ENCODE measurements at regions of chr16 and their contacts with region 1.

Region 1: GRCh38 chr16:55711959-55712876 is 56.4 kb downstream of the SLC6A2 start:
- DNase-seq: peak; percentile 40 to 75
- ATAC-seq: peak; percentile 31 to 73 (median 68)
- H3K4me3 ChIP-seq: no peak overlapping the region
- H3K4me3 Mint-ChIP-seq: no peak overlapping the region
- H3K27ac ChIP-seq: no peak overlapping the region
- H3K27ac Mint-ChIP-seq: no peak overlapping the region
- H3K4me1 ChIP-seq: no peaks in the 10 kb centered on the region
- H3K4me1 Mint-ChIP-seq: no peaks in the 10 kb centered on the region
- H3K27me3 ChIP-seq: no peaks in the 10 kb centered on the region
- H3K27me3 Mint-ChIP-seq: peaks cover 7% of the 10 kb centered on the region in 2 donors
- CTCF ChIP-seq: peak; percentile 81

Region 2: DNA sequence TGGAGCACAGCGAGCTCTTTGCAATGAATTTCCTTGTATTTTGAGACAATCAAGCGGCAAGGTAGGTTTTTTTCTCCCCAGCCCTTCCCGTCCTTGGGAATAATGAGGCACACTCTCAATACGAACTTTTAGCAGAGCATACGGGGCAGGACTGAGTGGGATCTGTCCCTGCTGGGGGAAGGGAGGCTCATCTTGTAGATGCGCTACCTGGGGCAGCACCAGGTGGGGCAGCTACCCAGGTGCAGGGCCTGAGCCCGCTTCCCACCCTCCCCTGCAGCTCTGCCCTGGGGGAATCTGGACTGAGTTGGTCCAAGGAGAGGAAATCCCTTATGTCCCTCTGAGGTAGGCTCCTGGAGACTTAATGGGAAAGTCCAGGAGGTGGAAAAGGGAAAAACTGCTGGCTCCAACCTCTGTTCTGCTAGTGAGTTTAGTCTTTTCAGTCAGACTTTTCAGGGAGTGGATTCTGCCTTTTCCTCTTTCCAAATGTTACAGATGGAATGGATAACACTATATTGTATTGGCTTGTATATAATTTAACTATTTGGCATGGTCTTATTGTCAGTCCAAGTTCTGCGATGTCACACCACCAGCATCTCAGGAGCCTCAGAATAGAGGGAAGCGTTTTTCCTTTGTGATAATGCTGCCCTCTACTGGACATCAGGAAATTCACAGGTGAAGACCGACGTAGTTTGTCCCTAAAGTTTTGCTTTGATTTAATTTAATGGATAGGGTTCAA is 130.3 kb after region 1 on chr16:
- intact Hi-C with region 1: loop called (anchors 1 kb)
- DNase-seq: peak in 1 of 2 donors; percentile 65
- ATAC-seq: peak in 2 of 3 donors; percentile 65 to 70
- H3K4me3 ChIP-seq: no peak overlapping the region
- H3K4me3 Mint-ChIP-seq: no peak overlapping the region
- H3K27ac ChIP-seq: no peak overlapping the region
- H3K27ac Mint-ChIP-seq: no peak overlapping the region
- H3K4me1 ChIP-seq: no peaks in the 10 kb centered on the region
- H3K4me1 Mint-ChIP-seq: no peaks in the 10 kb centered on the region
- H3K27me3 ChIP-seq: no peaks in the 10 kb centered on the region
- H3K27me3 Mint-ChIP-seq: peaks cover 8 to 12% of the 10 kb centered on the region in 2 donors
- CTCF ChIP-seq: peak; percentile 92

Region 3: DNA sequence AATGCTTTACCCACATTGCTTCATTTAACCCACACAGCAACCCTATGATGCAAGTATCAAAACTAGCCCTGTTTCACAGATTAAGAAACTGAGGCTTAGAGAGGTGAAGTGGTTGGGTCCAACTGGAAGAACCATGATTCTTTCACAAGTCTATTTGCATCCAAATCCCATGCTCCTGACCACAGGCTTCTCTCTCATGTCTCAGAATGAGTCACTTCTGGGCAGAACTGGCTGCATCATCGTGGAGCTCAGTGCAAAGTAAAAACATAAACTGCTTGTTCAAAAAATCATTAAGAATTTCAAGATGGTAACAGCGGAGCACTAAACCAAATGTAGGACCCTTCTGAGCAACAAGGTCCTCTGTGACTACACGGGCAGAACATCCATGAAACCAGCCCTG is 140.9 kb after region 1 on chr16:
- intact Hi-C with region 1: no loop called
- DNase-seq: no peak
- ATAC-seq: no peak
- H3K4me3 ChIP-seq: no peak overlapping the region
- H3K4me3 Mint-ChIP-seq: no peak overlapping the region
- H3K27ac ChIP-seq: no peak overlapping the region
- H3K27ac Mint-ChIP-seq: no peak overlapping the region
- H3K4me1 ChIP-seq: no peaks in the 10 kb centered on the region
- H3K4me1 Mint-ChIP-seq: no peaks in the 10 kb centered on the region
- H3K27me3 ChIP-seq: peaks cover 4% of the 10 kb centered on the region
- H3K27me3 Mint-ChIP-seq: peaks cover 18 to 34% of the 10 kb centered on the region in 2 donors
- CTCF ChIP-seq: no peak

Region 4: DNA sequence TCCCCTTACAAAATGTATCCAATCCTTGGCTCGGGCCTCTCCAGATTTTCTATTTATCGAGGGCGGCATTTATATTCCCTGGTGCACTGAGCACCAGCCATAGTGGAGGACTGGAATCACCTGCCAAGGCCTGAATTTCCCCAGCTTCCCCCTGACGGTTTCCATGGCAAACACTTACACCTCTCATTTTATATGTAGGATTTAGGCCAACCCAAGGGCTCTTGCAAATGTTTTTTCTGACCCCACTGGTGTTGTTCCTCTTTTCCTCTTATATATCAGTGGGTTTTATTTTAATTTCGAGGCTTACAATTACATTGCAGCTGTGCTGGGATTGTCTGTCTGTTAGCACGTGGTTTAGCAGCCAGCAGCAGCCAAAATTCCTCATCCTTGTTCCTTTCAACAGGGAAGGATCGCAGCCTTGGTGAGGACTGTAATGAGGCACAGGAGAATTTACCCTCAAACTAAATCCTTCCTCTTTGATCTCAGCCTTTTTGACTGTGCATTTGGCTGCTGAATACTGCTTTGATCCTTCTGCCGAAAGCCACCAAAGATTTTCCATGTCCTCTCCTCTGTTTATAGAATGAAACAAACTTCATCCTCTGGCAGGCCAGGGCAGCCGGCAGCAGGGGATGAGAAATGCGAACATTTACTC is 189.5 kb after region 1 on chr16:
- intact Hi-C with region 1: no loop called
- DNase-seq: no peak
- ATAC-seq: no peak
- H3K4me3 ChIP-seq: no peak overlapping the region
- H3K4me3 Mint-ChIP-seq: no peak overlapping the region
- H3K27ac ChIP-seq: no peak overlapping the region
- H3K27ac Mint-ChIP-seq: no peak overlapping the region
- H3K4me1 ChIP-seq: no peaks in the 10 kb centered on the region
- H3K4me1 Mint-ChIP-seq: no peaks in the 10 kb centered on the region
- H3K27me3 ChIP-seq: no peaks in the 10 kb centered on the region
- H3K27me3 Mint-ChIP-seq: peaks cover 4 to 24% of the 10 kb centered on the region in 2 donors
- CTCF ChIP-seq: no peak

Measured in natural killer cell (primary cell).